ENCODE measurements at regions of chr12 and their contacts with region 1.

Region 1: DNA sequence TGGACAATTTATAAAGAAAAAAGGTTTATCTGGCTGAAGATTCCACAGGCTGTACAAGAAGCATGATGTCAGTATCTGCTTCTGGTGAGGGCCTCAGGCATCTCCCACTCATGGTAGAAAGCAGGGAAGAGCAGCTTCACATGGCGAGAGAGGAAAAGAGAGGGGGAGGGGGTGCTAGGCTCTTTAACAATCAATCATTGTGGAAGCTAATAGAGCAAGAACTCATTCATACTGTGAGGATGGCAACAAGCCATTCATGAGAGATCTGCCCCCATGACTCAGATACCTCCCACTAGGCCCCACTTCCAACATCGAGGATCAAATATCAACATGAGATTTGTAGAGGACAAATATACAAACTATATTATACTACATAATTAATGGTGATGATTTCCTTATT is 361.9 kb upstream of the FAR2 start:
- DNase-seq: peak in 33 of 42 donors; percentile 5 to 83 (median 31)

Region 2: GRCh38 chr12:28872654-28873268 is 85.6 kb after region 1 on chr12:
- intact Hi-C with region 1: loop called (anchors 5 kb)
- DNase-seq: peak in 41 of 42 donors; percentile 6 to 81 (median 50)

Measured in head of caudate nucleus (tissue), 42 donors.